ENCODE measurements at regions of chr4 and their contacts with region 1.

Region 1: GRCh38 chr4:56544573-56545131 is 39.1 kb downstream of the ARL9 start:
- DNase-seq: peak; percentile 87
- ATAC-seq: peak; percentile 100
- H3K4me3 Mint-ChIP-seq: peak overlapping the region; percentile 67
- H3K27ac Mint-ChIP-seq: no peak overlapping the region
- H3K4me1 Mint-ChIP-seq: peaks cover 19% of the 10 kb centered on the region
- H3K27me3 Mint-ChIP-seq: peaks cover 17% of the 10 kb centered on the region

Region 2: DNA sequence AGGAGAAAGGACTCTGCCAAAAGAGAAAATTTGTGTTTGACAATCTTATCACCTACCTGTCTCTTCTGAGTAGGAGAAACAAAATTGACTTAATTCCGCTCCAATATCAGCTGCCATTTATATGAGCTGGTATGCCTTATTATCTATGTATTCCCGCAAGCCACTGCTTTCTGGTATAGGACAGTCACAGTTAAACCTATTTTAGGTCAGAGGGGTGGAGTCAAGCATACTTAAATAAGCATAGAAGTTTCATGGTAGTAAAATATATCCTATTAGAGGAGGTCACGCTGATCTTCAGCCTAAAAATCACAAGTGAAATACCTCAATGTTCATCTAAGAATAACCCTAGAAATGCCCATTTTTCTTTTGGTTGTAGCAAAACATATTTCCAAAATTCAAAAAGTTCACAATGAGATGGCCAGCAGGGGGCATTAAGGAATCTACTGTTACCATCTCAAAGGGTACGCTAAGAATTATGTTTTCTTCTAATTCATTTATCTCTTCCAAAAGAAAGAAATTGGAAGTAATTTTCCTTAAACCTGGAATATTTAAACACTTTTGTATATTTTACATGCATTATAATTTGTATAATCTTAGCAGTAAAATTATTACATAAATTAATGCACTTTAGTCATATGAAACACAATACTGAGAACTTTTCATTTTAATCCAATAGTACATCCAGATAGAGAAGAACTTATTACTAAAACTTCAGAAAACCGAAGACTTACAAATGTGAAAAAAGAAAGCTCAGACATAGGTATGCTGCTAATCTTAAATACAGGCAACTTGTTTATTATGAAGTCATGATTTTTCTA is 119.7 kb before region 1 on chr4:
- CTCF ChIA-PET with region 1: interaction called, 15 read pairs
- DNase-seq: no peak
- ATAC-seq: no peak
- H3K4me3 Mint-ChIP-seq: no peak overlapping the region
- H3K27ac Mint-ChIP-seq: no peak overlapping the region
- H3K4me1 Mint-ChIP-seq: peaks cover 29% of the 10 kb centered on the region
- H3K27me3 Mint-ChIP-seq: no peaks in the 10 kb centered on the region

Region 3: DNA sequence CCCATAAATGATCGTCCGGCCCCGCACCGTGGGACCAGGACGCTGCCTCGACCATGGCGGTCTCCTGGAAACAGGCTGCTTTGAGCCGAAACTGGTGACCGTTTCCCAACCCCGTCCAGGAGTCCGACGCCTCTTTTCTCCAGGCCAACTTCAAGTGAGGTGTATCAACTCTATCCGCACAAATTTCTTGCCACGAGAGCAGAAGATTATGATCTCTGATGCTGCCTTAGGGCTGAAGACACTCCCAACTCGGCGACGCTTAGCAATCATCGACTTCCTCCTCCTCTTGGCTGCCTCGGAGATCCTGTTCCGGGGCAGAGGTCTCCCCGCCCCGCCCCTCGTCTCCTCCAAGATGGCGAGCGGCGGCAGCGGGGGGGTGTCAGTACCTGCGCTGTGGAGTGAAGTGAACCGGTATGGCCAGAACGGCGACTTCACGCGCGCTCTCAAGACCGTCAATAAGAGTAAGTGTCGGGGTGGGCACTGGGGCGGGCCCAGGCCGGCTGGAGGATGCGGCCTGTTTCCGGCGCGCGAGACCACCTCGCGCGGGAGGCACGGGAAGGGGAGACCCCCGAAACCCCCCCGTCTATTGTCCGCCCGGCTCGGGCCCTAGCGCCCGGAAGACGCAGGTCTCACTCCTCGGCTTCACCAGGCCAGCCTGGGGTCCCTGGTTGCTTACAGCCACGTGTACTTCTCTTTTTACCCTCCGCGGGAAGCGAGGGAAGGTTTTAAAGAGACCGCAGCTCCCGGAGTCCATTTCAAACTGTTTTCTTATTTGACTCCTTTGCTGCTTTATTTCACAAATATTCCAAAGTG is 77.2 kb before region 1 on chr4 and contains the start of gene SRP72:
- CTCF ChIA-PET with region 1: no interaction called
- DNase-seq: peak; percentile 94
- ATAC-seq: peak; percentile 94
- H3K4me3 Mint-ChIP-seq: peak within 1 kb of the TSS; percentile 95
- H3K27ac Mint-ChIP-seq: peak within 1 kb of the TSS; percentile 94
- H3K4me1 Mint-ChIP-seq: peaks cover 50% of the 10 kb centered on the region
- H3K27me3 Mint-ChIP-seq: no peaks in the 10 kb centered on the region
- total RNA-seq, gene SRP72: 126 to 167 TPM